ENCODE measurements at regions of chr11 and their contacts with region 1.

Region 1: GRCh38 chr11:116772443-116773202 is at the start of gene BUD13:
- DNase-seq: peak; percentile 88 to 96 (median 96)
- ATAC-seq: peak; percentile 92
- H3K4me3 ChIP-seq: peak within 1 kb of the TSS; percentile 97 to 98
- H3K4me3 Mint-ChIP-seq: peak within 1 kb of the TSS; percentile 97
- H3K27ac ChIP-seq: peak within 1 kb of the TSS; percentile 87 to 95
- H3K27ac Mint-ChIP-seq: peak within 1 kb of the TSS; percentile 97
- H3K4me1 ChIP-seq: peaks cover 24% of the 10 kb centered on the region
- H3K4me1 Mint-ChIP-seq: peaks cover 35% of the 10 kb centered on the region
- H3K27me3 ChIP-seq: no peaks in the 10 kb centered on the region
- H3K27me3 Mint-ChIP-seq: no peaks in the 10 kb centered on the region
- CTCF ChIP-seq: no peak
- total RNA-seq, gene BUD13: 12.5 TPM

Region 2: GRCh38 chr11:116193321-116194131 is 579.1 kb before region 1 on chr11:
- CTCF ChIA-PET with region 1: no interaction called
- POLR2A ChIA-PET with region 1: no interaction called
- intact Hi-C with region 1: no loop called
- DNase-seq: no peak
- ATAC-seq: no peak
- H3K4me3 ChIP-seq: no peak overlapping the region
- H3K4me3 Mint-ChIP-seq: no peak overlapping the region
- H3K27ac ChIP-seq: no peak overlapping the region
- H3K27ac Mint-ChIP-seq: no peak overlapping the region
- H3K4me1 ChIP-seq: no peaks in the 10 kb centered on the region
- H3K4me1 Mint-ChIP-seq: peaks cover 1% of the 10 kb centered on the region
- H3K27me3 ChIP-seq: peaks cover 2 to 12% of the 10 kb centered on the region in 2 experiments
- H3K27me3 Mint-ChIP-seq: peaks cover 31% of the 10 kb centered on the region
- CTCF ChIP-seq: no peak

Region 3: GRCh38 chr11:116657842-116658825 is 114.5 kb before region 1 on chr11:
- CTCF ChIA-PET with region 1: no interaction called
- POLR2A ChIA-PET with region 1: no interaction called
- intact Hi-C with region 1: no loop called
- DNase-seq: peak in 1 of 9 experiments; percentile 15
- ATAC-seq: no peak
- H3K4me3 ChIP-seq: no peak overlapping the region
- H3K4me3 Mint-ChIP-seq: no peak overlapping the region
- H3K27ac ChIP-seq: no peak overlapping the region
- H3K27ac Mint-ChIP-seq: no peak overlapping the region
- H3K4me1 ChIP-seq: no peaks in the 10 kb centered on the region
- H3K4me1 Mint-ChIP-seq: no peaks in the 10 kb centered on the region
- H3K27me3 ChIP-seq: peaks cover 0 to 2% of the 10 kb centered on the region in 2 experiments
- H3K27me3 Mint-ChIP-seq: peaks cover 45% of the 10 kb centered on the region
- CTCF ChIP-seq: no peak

Region 4: GRCh38 chr11:116787786-116788486 is 15.3 kb after region 1 on chr11 and contains the start of gene ZPR1:
- CTCF ChIA-PET with region 1: interaction called, 12 read pairs
- POLR2A ChIA-PET with region 1: interaction called, 43 read pairs
- intact Hi-C with region 1: loop called (anchors 1 kb)
- DNase-seq: peak; percentile 69 to 91 (median 87)
- ATAC-seq: peak; percentile 80
- H3K4me3 ChIP-seq: peak within 1 kb of the TSS; percentile 60 to 94
- H3K4me3 Mint-ChIP-seq: peak within 1 kb of the TSS; percentile 95
- H3K27ac ChIP-seq: peak within 1 kb of the TSS; percentile 80 to 95
- H3K27ac Mint-ChIP-seq: peak within 1 kb of the TSS; percentile 91
- H3K4me1 ChIP-seq: peaks cover 29% of the 10 kb centered on the region
- H3K4me1 Mint-ChIP-seq: peaks cover 54% of the 10 kb centered on the region
- H3K27me3 ChIP-seq: no peaks in the 10 kb centered on the region
- H3K27me3 Mint-ChIP-seq: no peaks in the 10 kb centered on the region
- CTCF ChIP-seq: no peak
- total RNA-seq, gene ZPR1: 132 to 134 TPM

Region 5: GRCh38 chr11:116853461-116854073 is 80.9 kb after region 1 on chr11:
- CTCF ChIA-PET with region 1: no interaction called
- POLR2A ChIA-PET with region 1: no interaction called
- intact Hi-C with region 1: loop called (anchors 5 kb)
- DNase-seq: peak; percentile 13 to 90 (median 61)
- ATAC-seq: peak; percentile 95
- H3K4me3 ChIP-seq: peak overlapping the region; percentile 4 to 7
- H3K4me3 Mint-ChIP-seq: peak overlapping the region; percentile 47
- H3K27ac ChIP-seq: peak overlapping the region; percentile 47 to 72
- H3K27ac Mint-ChIP-seq: peak overlapping the region; percentile 69
- H3K4me1 ChIP-seq: peaks cover 56% of the 10 kb centered on the region
- H3K4me1 Mint-ChIP-seq: peaks cover 73% of the 10 kb centered on the region
- H3K27me3 ChIP-seq: no peaks in the 10 kb centered on the region
- H3K27me3 Mint-ChIP-seq: no peaks in the 10 kb centered on the region
- CTCF ChIP-seq: no peak

Region 6: GRCh38 chr11:117178210-117179034 is 405.8 kb after region 1 on chr11 and contains the start of gene SIDT2:
- CTCF ChIA-PET with region 1: no interaction called
- POLR2A ChIA-PET with region 1: interaction called, 3 read pairs
- intact Hi-C with region 1: loop called in 1 of 2 experiments (anchors 2 kb)
- DNase-seq: peak; percentile 78 to 94 (median 90)
- ATAC-seq: peak; percentile 92
- H3K4me3 ChIP-seq: peak within 1 kb of the TSS; percentile 57 to 76
- H3K4me3 Mint-ChIP-seq: peak within 1 kb of the TSS; percentile 96
- H3K27ac ChIP-seq: peak within 1 kb of the TSS; percentile 50 to 80
- H3K27ac Mint-ChIP-seq: peak within 1 kb of the TSS; percentile 97
- H3K4me1 ChIP-seq: peaks cover 24% of the 10 kb centered on the region
- H3K4me1 Mint-ChIP-seq: peaks cover 29% of the 10 kb centered on the region
- H3K27me3 ChIP-seq: no peaks in the 10 kb centered on the region
- H3K27me3 Mint-ChIP-seq: no peaks in the 10 kb centered on the region
- CTCF ChIP-seq: no peak
- total RNA-seq, gene SIDT2: 133 to 134 TPM

Region 7: DNA sequence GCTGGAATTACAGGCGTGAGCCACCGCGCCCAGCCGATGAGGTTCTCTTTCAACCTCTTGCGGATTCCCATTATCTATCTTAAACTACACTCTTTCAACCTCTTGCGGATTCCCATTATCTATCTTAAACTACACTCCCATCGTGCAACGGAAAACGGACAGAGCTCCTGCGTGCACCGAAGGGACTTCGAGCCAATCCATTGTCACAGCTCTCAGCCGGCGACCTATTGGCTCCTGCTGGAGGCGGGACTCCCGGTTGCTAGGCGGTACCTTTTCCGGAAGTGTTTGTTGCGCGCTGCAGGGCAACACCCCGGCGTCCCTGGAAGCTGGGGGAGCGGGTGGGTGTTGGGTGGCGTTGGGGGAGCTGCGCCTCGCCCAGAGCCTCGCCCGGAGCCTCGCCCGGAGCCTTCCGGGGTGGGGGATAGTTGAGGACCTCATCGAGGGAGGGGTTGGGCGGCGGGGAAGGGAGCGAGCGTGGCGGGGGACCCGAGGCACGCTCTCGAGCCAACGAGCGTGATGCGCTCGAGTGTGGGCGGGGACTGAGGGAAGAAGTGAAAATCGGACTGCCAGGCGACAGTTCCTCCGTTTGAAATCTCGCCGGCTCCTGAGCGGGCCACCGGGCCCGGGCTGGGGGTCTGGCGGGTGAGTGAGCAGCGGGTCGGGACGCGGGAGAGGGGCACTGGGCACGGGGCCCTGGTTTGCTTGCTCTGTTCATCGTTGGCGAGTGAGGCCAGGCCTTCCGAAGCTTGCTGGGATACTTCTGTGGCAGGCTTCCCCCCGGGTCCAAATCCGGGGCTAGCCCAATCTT is 555.1 kb after region 1 on chr11 and contains the start of gene CEP164:
- CTCF ChIA-PET with region 1: no interaction called
- POLR2A ChIA-PET with region 1: no interaction called
- intact Hi-C with region 1: loop called (anchors 5 to 10 kb)
- DNase-seq: peak; percentile 90 to 97 (median 95)
- ATAC-seq: peak; percentile 90
- H3K4me3 ChIP-seq: peak within 1 kb of the TSS; percentile 64 to 91
- H3K4me3 Mint-ChIP-seq: no peak within 1 kb of the TSS
- H3K27ac ChIP-seq: peak within 1 kb of the TSS; percentile 92 to 94
- H3K27ac Mint-ChIP-seq: no peak within 1 kb of the TSS
- H3K4me1 ChIP-seq: peaks cover 9% of the 10 kb centered on the region
- H3K4me1 Mint-ChIP-seq: peaks cover 9% of the 10 kb centered on the region
- H3K27me3 ChIP-seq: no peaks in the 10 kb centered on the region
- H3K27me3 Mint-ChIP-seq: no peaks in the 10 kb centered on the region
- CTCF ChIP-seq: no peak
- total RNA-seq, gene CEP164: 23.9 to 28.4 TPM

Measured in CD8-positive, alpha-beta T cell (primary cell).